Mammary epithelial cell (primary cell): ENCODE measurements at regions of chr13 and their contacts with region 1.

Region 1: GRCh38 chr13:45623515-45624090 is 8.1 kb upstream of the ERICH6B start:
- DNase-seq: no peak
- H3K4me3 ChIP-seq: no peak overlapping the region
- H3K27ac ChIP-seq: no peak overlapping the region
- H3K4me1 ChIP-seq: no peaks in the 10 kb centered on the region
- H3K27me3 ChIP-seq: peaks cover 4% of the 10 kb centered on the region
- CTCF ChIP-seq: peak; percentile 35 to 60

Region 2: DNA sequence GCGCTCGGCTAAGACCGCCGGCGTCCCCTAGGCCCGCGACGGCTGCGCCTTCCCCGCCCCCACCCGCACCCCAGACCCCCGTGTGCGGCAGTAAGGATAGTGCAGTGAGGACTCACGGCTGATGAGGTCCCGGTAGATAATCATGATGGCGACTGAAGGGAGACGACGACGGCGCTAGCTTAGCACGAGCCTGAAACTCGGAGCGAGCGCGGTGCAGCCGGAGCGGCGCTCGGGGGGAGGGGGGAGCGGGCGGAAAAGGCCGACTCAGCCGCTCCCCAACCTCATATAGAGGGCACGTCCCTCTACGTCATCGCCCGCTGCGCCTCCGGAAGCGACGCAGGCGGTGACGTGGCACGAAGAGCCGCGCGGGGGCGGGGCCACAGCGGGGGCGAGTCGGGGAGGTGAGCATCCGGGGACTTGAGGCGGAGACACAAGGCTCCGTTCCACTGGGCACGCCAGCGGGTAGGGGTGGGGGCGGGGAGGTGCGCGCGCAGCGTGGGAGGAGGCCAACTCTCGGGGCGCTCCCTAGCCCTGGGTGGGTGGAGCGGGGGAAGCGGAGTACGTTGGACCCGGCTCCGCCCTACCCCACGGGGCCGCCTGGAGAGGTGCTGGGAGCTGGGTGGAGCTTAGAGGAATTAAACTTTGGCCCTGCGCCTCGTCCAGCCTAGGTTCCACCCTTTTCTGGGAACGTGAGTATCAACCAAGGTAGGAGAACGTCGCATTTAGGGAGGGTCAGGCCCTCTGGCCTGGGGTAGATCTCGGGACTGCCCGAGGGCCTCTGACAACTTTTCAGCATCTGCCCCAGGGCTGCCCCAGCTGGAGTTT is 282.5 kb before region 1 on chr13 and contains the start of gene TPT1:
- CTCF ChIA-PET with region 1: no interaction called
- dilution Hi-C with region 1: no loop called
- in situ Hi-C with region 1: no loop called
- intact Hi-C with region 1: no loop called
- DNase-seq: peak; percentile 99
- H3K4me3 ChIP-seq: peak within 1 kb of the TSS; percentile 77 to 96 (median 88)
- H3K27ac ChIP-seq: peak within 1 kb of the TSS; percentile 94
- H3K4me1 ChIP-seq: peaks cover 39% of the 10 kb centered on the region
- H3K27me3 ChIP-seq: no peaks in the 10 kb centered on the region
- CTCF ChIP-seq: no peak
- total RNA-seq, gene TPT1: 1,890 to 3,324 TPM

Region 3: DNA sequence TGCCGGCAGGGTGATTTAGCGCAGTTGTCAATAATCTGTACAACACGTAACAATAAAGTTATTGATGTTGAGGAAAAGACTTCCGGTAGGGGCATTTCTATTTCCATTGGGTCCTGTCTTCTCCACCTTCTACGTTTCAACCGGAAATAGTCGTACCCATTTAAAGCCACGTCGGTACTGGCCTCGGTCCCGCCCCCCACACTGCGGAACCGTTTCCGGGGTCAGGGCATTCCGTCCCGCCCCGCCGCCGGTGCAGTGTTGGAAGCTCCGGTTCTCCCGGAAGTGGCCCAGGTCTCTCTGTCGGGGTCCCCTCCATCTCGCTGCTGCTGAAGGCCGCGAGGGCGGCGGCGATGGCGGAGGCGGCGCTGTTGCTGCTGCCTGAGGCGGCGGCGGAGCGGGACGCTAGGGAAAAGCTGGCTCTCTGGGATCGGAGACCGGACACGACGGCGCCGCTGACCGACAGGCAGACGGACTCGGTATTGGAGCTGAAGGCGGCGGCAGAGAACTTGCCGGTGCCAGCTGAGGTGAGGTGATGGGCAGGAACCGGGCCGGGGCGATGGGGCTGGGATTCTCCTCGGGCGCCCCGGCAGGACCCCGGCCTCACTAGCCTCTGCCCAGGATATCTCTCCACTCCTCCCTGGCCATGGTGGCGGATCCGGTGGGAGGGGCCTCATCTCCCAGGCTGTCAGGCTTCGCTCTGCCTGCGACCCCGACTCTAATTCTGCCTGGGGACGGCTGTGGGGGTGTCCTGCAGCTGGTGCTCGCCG is 158.7 kb before region 1 on chr13 and contains the start of gene COG3:
- CTCF ChIA-PET with region 1: no interaction called
- dilution Hi-C with region 1: no loop called
- in situ Hi-C with region 1: no loop called
- intact Hi-C with region 1: no loop called
- DNase-seq: peak; percentile 98
- H3K4me3 ChIP-seq: peak within 1 kb of the TSS; percentile 75 to 98 (median 89)
- H3K27ac ChIP-seq: peak within 1 kb of the TSS; percentile 74
- H3K4me1 ChIP-seq: peaks cover 16% of the 10 kb centered on the region
- H3K27me3 ChIP-seq: no peaks in the 10 kb centered on the region
- CTCF ChIP-seq: peak in 1 of 2 donors; percentile 42
- total RNA-seq, gene COG3: 35.7 to 39.0 TPM

Region 4: GRCh38 chr13:45670189-45670885 is 46.7 kb after region 1 on chr13:
- CTCF ChIA-PET with region 1: no interaction called
- dilution Hi-C with region 1: no loop called
- in situ Hi-C with region 1: no loop called
- intact Hi-C with region 1: no loop called
- DNase-seq: no peak
- H3K4me3 ChIP-seq: no peak overlapping the region
- H3K27ac ChIP-seq: no peak overlapping the region
- H3K4me1 ChIP-seq: peaks cover 8% of the 10 kb centered on the region
- H3K27me3 ChIP-seq: no peaks in the 10 kb centered on the region
- CTCF ChIP-seq: no peak

Region 5: DNA sequence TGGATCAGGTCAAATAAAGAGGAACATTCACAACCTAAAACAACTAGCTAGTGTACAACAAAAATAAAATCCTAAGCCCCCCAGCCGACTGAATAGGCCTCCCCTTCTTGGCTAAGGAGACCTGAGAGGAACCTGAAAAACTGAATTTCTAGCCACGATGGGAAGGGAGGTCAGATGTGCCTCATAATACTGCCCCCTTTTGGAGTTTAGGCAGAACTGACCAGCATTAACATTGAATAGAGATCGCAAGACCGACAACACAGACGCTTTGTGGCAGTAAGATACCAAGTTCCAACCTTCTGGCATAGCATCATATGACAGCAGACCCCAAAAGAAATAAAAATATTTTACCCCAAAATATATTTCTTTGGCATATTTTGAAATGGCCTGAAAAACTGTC is 94.5 kb after region 1 on chr13:
- CTCF ChIA-PET with region 1: no interaction called
- dilution Hi-C with region 1: no loop called
- in situ Hi-C with region 1: loop called in 1 of 2 experiments (anchors 10 kb)
- intact Hi-C with region 1: loop called (anchors 1 kb)
- DNase-seq: peak; percentile 9
- H3K4me3 ChIP-seq: no peak overlapping the region
- H3K27ac ChIP-seq: no peak overlapping the region
- H3K4me1 ChIP-seq: no peaks in the 10 kb centered on the region
- H3K27me3 ChIP-seq: no peaks in the 10 kb centered on the region
- CTCF ChIP-seq: peak; percentile 69 to 79

Region 6: GRCh38 chr13:45879670-45880069 is 256.1 kb after region 1 on chr13:
- CTCF ChIA-PET with region 1: no interaction called
- dilution Hi-C with region 1: no loop called
- in situ Hi-C with region 1: no loop called
- intact Hi-C with region 1: loop called (anchors 1 kb)
- DNase-seq: peak; percentile 60
- H3K4me3 ChIP-seq: no peak overlapping the region
- H3K27ac ChIP-seq: no peak overlapping the region
- H3K4me1 ChIP-seq: peaks cover 20% of the 10 kb centered on the region
- H3K27me3 ChIP-seq: no peaks in the 10 kb centered on the region
- CTCF ChIP-seq: peak; percentile 61 to 74

Region 7: GRCh38 chr13:46010148-46010547 is 386.5 kb after region 1 on chr13:
- CTCF ChIA-PET with region 1: no interaction called
- dilution Hi-C with region 1: no loop called
- in situ Hi-C with region 1: no loop called
- intact Hi-C with region 1: loop called (anchors 10 kb)
- DNase-seq: no peak
- H3K4me3 ChIP-seq: no peak overlapping the region
- H3K27ac ChIP-seq: no peak overlapping the region
- H3K4me1 ChIP-seq: peaks cover 4% of the 10 kb centered on the region
- H3K27me3 ChIP-seq: no peaks in the 10 kb centered on the region
- CTCF ChIP-seq: peak; percentile 18 to 47

Region 8: GRCh38 chr13:46126552-46127357 is 503.2 kb after region 1 on chr13:
- CTCF ChIA-PET with region 1: no interaction called
- dilution Hi-C with region 1: no loop called
- in situ Hi-C with region 1: loop called in 1 of 2 experiments (anchors 10 kb)
- intact Hi-C with region 1: loop called (anchors 10 kb)
- DNase-seq: peak; percentile 74
- H3K4me3 ChIP-seq: no peak overlapping the region
- H3K27ac ChIP-seq: no peak overlapping the region
- H3K4me1 ChIP-seq: peaks cover 6% of the 10 kb centered on the region
- H3K27me3 ChIP-seq: no peaks in the 10 kb centered on the region
- CTCF ChIP-seq: peak; percentile 98